ENCODE measurements at regions of chr5 and their contacts with region 1.

Region 1: DNA sequence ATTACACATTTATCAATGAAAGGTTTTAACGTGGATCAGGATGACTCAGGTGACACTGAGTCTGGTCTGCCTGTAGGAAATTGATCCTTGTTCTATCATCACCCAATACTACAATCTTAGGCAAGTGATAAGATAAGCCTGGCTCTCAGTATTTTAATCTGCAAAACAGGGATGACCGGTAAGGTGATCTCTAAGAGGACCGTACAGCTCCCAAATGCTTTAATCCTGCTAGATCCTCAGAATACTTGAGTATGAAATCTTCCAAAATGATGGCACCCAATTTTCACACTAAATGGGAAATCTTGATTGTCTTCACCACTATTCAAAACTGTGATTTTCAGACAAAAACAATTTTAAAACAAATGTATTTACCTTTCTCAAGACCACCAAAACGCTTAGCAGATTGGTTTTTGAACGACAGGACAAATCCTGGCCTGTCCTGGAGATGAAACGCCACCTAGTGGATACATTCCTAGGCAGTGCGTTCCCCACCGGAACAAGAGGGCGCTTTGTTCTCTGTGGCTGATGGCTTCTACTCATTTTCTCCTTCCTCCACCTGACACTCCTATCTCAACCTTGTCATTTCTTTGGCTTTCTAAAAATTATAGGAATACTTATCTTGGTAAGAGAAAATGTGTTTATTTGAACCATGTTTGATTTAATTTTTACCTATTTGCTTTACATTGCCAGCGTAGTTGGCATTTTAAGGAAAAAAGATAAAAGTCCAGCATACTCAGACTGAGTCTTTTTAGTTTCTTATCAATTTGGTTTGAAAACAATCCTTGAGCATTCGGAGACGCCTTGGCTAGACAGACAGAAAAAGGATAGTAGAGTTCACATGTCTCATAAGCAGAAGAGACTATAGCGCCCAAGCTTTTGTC is 41.2 kb upstream of the VCAN start:
- DNase-seq: peak; percentile 38
- H3K4me3 Mint-ChIP-seq: no peak overlapping the region
- H3K27ac Mint-ChIP-seq: no peak overlapping the region
- H3K4me1 Mint-ChIP-seq: no peaks in the 10 kb centered on the region
- H3K27me3 Mint-ChIP-seq: peaks cover 2% of the 10 kb centered on the region

Region 2: DNA sequence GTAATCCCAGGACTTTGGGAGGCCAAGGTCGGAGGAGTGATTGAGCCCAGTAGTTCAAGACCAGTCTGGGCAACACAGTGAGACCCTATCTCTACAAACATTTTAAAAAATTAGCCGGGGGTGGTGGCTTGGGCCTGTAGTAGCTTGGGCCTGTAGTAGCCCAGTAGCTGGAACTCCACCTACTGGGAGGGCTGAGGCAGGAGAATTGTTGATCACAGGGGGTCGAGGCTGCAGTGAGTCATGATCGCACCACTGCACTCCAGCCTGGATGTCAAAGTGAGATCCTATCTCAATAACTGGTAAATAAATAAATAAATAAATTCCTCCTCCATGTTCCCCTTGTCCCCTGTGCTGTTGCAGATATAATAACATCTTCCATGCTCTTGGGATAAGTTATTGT is 55.5 kb after region 1 on chr5:
- intact Hi-C with region 1: no loop called
- DNase-seq: no peak
- H3K4me3 Mint-ChIP-seq: no peak overlapping the region
- H3K27ac Mint-ChIP-seq: no peak overlapping the region
- H3K4me1 Mint-ChIP-seq: no peaks in the 10 kb centered on the region
- H3K27me3 Mint-ChIP-seq: peaks cover 8% of the 10 kb centered on the region

Region 3: GRCh38 chr5:83564069-83564749 is 133.8 kb after region 1 on chr5:
- intact Hi-C with region 1: loop called (anchors 2 kb)
- DNase-seq: no peak
- H3K4me3 Mint-ChIP-seq: no peak overlapping the region
- H3K27ac Mint-ChIP-seq: no peak overlapping the region
- H3K4me1 Mint-ChIP-seq: no peaks in the 10 kb centered on the region
- H3K27me3 Mint-ChIP-seq: peaks cover 20% of the 10 kb centered on the region

Region 4: GRCh38 chr5:83595215-83595614 is 164.8 kb after region 1 on chr5:
- intact Hi-C with region 1: no loop called
- DNase-seq: no peak
- H3K4me3 Mint-ChIP-seq: no peak overlapping the region
- H3K27ac Mint-ChIP-seq: no peak overlapping the region
- H3K4me1 Mint-ChIP-seq: no peaks in the 10 kb centered on the region
- H3K27me3 Mint-ChIP-seq: peaks cover 2% of the 10 kb centered on the region

Measured in activated T-helper 1 cell treated with anti-CD3 and anti-CD28 coated beads, Interleukin-12 subunit alpha, Interleukin-12 subunit beta, Interleukin-2, Interleukin-4 antibody, amounts not matched to agents 30 ng/mL and 10 ng/mL and 1 ng/mL, durations not matched to agents 14 hours and 24 hours and 36 hours (primary cell).